ENCODE measurements at regions of chr13 and their contacts with region 1.

Region 1: GRCh38 chr13:49443704-49444523 is at the starts of genes CAB39L and SETDB2:
- DNase-seq: peak; percentile 98 to 99
- ATAC-seq: peak; percentile 96 to 98 (median 97)
- H3K4me3 ChIP-seq: peak within 1 kb of the TSS; percentile 80
- H3K27ac ChIP-seq: peak within 1 kb of the TSS; percentile 81
- H3K4me1 ChIP-seq: peaks cover 5% of the 10 kb centered on the region
- H3K27me3 ChIP-seq: no peaks in the 10 kb centered on the region
- CTCF ChIP-seq: peak; percentile 17
- total RNA-seq, gene CAB39L: 1.8 to 6.1 (median 4.2) TPM
- total RNA-seq, gene SETDB2: 1.7 to 7.9 (median 5.5) TPM

Region 2: GRCh38 chr13:49464621-49465325 is 20.9 kb after region 1 on chr13:
- intact Hi-C with region 1: loop called in 1 of 2 experiments (anchors 1 kb)
- DNase-seq: no peak
- ATAC-seq: no peak
- H3K4me3 ChIP-seq: no peak overlapping the region
- H3K27ac ChIP-seq: no peak overlapping the region
- H3K4me1 ChIP-seq: no peaks in the 10 kb centered on the region
- H3K27me3 ChIP-seq: no peaks in the 10 kb centered on the region
- CTCF ChIP-seq: no peak

Region 3: DNA sequence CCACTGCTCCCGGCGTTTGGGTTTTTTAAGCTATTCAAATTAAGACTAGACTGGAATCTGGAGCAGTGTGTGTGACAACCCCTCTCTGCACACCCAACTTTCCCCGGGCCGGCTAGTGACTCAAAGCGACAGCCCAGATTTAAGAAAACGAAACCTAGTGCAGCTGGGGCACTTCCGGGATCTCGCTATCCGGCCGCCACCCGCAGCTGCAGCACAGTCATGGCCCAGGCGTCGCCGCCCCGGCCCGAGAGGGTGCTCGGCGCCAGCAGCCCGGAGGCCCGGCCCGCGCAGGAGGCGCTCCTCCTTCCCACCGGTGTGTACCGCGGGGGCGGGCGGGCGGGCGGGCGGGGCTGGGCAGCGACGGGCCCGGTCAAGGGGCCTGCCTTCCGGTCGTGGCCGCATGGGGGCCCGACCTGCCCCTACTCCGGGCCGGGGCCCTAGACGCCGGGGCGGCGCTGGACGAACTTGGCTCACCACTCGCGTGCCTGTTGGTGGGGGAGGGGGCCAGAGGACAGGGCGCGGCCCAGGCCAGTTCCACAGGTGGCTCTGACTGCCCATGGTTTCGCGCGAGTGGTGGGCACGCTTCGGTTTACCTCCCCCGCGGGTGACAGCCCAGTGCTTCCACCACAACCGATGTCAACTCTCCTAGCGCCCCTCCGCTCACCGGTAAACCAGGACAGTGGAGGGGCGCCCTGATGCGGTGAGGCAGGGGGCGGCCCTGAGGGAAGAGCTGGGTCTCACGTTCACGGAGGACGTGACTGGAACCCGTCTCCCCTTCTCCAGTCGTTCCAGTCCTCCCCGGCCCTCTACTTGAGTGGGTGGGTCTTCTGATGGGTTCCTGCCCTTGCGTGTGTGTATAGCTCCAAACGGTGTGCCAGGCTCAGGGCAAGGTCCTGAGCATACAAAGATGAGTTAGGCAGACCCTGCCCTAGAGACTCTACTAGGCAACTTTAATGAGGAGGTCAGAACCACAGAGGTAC is 52.2 kb after region 1 on chr13 and contains the start of gene PHF11:
- intact Hi-C with region 1: loop called (anchors 2 to 5 kb)
- DNase-seq: peak; percentile 82 to 91
- ATAC-seq: peak; percentile 92 to 93 (median 92)
- H3K4me3 ChIP-seq: peak within 1 kb of the TSS; percentile 87
- H3K27ac ChIP-seq: peak within 1 kb of the TSS; percentile 94
- H3K4me1 ChIP-seq: peaks cover 4% of the 10 kb centered on the region
- H3K27me3 ChIP-seq: no peaks in the 10 kb centered on the region
- CTCF ChIP-seq: peak; percentile 15
- total RNA-seq, gene PHF11: 8.2 to 14.7 (median 10.1) TPM

Region 4: GRCh38 chr13:49512578-49512977 is 68.7 kb after region 1 on chr13:
- intact Hi-C with region 1: no loop called
- DNase-seq: no peak
- ATAC-seq: no peak
- H3K4me3 ChIP-seq: no peak overlapping the region
- H3K27ac ChIP-seq: no peak overlapping the region
- H3K4me1 ChIP-seq: no peaks in the 10 kb centered on the region
- H3K27me3 ChIP-seq: no peaks in the 10 kb centered on the region
- CTCF ChIP-seq: no peak